ENCODE measurements at regions of chr15 and their contacts with region 1.

Region 1: GRCh38 chr15:63970621-63971426 is 75.5 kb downstream of the DAPK2 start:
- DNase-seq: peak; percentile 65
- ATAC-seq: peak; percentile 85
- H3K4me3 Mint-ChIP-seq: no peak overlapping the region
- H3K27ac Mint-ChIP-seq: peak overlapping the region; percentile 97
- H3K4me1 Mint-ChIP-seq: peaks cover 31% of the 10 kb centered on the region
- H3K27me3 Mint-ChIP-seq: no peaks in the 10 kb centered on the region

Region 2: GRCh38 chr15:63626955-63627354 is 343.9 kb before region 1 on chr15:
- CTCF ChIA-PET with region 1: no interaction called
- POLR2A ChIA-PET with region 1: no interaction called
- intact Hi-C with region 1: no loop called
- DNase-seq: no peak
- ATAC-seq: no peak
- H3K4me3 Mint-ChIP-seq: no peak overlapping the region
- H3K27ac Mint-ChIP-seq: peak overlapping the region; percentile 37
- H3K4me1 Mint-ChIP-seq: peaks cover 4% of the 10 kb centered on the region
- H3K27me3 Mint-ChIP-seq: no peaks in the 10 kb centered on the region

Region 3: DNA sequence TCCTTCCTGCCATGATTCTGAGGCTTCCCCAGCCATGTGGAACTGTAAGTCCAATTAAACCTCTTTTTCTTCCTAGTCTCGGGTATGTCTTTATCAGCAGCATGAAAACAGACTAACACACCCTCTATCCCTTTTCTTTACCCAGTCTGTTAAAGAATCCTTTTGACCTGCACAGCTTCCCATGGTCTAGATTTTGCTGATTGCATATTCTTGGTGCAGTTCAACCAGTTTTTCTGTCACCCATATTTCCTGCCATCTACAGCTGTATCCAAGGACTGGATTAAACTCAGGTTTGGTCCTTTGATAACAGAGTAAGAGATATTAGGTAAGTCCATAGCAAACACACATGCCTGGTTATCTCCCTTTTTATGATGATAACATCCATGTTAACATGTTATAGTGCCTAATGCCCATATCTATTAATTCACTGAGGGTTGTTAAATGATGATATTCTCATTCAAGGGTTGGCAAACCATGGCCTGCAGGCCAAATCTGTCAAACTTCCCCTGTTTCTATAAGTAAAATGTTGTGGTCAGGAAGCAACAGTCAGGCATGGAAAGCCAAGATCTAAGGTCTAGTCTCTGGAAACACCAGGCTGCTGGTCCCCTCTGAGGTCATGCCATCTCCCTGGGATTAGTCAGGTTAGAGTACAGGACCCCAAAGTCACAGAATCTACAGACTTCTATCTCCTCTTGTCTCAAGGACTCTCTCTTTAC is 122.2 kb before region 1 on chr15:
- CTCF ChIA-PET with region 1: no interaction called
- POLR2A ChIA-PET with region 1: no interaction called
- intact Hi-C with region 1: no loop called
- DNase-seq: no peak
- ATAC-seq: no peak
- H3K4me3 Mint-ChIP-seq: no peak overlapping the region
- H3K27ac Mint-ChIP-seq: peak overlapping the region; percentile 49
- H3K4me1 Mint-ChIP-seq: peaks cover 13% of the 10 kb centered on the region
- H3K27me3 Mint-ChIP-seq: no peaks in the 10 kb centered on the region

Region 4: GRCh38 chr15:63938486-63939061 is 32.2 kb before region 1 on chr15:
- CTCF ChIA-PET with region 1: interaction called, 13 read pairs
- POLR2A ChIA-PET with region 1: no interaction called
- intact Hi-C with region 1: loop called in 1 of 2 experiments (anchors 1 kb)
- DNase-seq: peak; percentile 54
- ATAC-seq: peak; percentile 70
- H3K4me3 Mint-ChIP-seq: no peak overlapping the region
- H3K27ac Mint-ChIP-seq: peak overlapping the region; percentile 87
- H3K4me1 Mint-ChIP-seq: peaks cover 25% of the 10 kb centered on the region
- H3K27me3 Mint-ChIP-seq: no peaks in the 10 kb centered on the region

Region 5: DNA sequence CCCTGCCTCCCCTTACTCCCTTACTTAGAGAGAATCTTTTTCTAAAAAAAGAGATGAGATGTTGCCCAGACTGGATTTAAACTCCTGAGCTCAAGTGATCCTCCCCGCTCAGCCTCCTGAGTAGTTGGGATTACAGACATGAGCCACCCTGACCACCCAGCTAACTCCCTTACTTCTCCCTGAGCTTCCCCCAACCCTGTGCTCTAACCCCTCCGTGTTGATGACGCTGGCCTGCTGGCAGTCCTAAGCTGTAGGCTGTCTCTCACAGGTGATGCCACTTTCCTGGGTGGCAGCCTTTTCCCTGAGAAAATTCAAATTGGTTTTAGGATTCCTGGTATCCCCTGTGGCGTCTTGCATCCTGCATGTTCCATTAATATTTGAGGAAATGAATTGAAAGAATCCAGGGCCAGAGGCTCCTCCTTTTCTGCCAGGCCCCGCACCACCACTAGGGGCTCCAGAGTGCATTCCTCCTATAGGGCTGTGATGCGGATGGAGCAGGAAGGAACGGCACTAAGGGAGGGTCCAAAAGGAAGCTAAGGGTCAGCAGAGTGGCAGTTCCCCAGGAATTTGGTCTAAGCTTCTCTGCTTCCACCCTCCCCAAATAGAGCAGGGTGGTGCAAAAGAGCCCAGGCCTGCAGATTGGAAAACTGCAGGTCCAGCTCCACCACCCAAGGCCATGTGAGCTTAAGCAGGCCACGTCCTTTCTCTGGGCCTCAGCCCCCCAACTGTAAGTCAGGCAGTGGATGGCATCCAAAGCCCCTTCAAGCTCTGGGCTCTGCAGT is 25.6 kb before region 1 on chr15:
- CTCF ChIA-PET with region 1: interaction called, 13 read pairs
- POLR2A ChIA-PET with region 1: no interaction called
- intact Hi-C with region 1: no loop called
- DNase-seq: peak; percentile 85
- ATAC-seq: peak; percentile 97
- H3K4me3 Mint-ChIP-seq: no peak overlapping the region
- H3K27ac Mint-ChIP-seq: peak overlapping the region; percentile 51
- H3K4me1 Mint-ChIP-seq: peaks cover 4% of the 10 kb centered on the region
- H3K27me3 Mint-ChIP-seq: no peaks in the 10 kb centered on the region

Measured in activated CD4-positive, alpha-beta T cell treated with anti-CD3 and anti-CD28 coated beads for 36 hours (primary cell).